ENCODE measurements at regions of chr2 and their contacts with region 1.

Region 1: DNA sequence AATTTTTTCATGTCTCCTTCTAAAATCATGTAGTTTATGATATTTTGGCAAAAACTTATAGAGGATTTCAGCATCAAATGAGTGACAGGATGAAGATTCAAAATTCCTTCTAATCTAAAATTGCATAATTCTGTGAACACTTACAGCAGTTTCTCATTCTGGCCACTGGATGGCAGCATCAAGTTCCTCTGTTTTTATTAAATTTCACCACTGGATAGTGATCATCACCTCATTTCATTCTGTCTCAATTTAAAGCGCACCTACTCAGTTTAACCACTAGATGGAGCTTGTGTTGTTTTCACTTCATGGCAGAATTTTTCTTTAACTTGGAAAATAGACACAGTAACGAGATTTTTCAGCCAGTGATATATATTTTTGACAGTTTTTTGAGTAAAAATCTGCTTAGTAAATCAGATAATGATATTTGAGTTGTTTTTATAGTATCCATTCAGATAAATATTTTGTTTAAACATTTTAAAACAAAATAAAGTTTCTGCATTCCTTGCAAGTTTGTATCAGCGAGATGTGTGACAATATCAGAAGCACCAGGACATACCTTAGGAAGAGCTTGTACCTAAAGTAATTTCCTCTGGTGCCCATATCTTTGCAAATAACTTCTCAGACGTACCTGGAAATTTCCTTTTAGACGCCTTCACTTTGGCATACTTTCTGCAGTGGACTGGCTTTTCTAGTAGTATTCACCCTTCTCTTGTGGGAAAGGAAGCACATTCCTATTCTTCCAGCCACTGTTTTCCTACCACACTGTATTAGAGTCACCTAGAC is 94.7 kb upstream of the ARHGAP15 start:
- DNase-seq: peak; percentile 78 to 88 (median 85)
- H3K4me3 ChIP-seq: no peak overlapping the region
- H3K4me3 Mint-ChIP-seq: no peak overlapping the region
- H3K27ac ChIP-seq: no peak overlapping the region
- H3K27ac Mint-ChIP-seq: no peak overlapping the region
- H3K4me1 ChIP-seq: peaks cover 12 to 13% of the 10 kb centered on the region in 2 donors
- H3K4me1 Mint-ChIP-seq: peaks cover 10% of the 10 kb centered on the region
- H3K27me3 ChIP-seq: no peaks in the 10 kb centered on the region
- H3K27me3 Mint-ChIP-seq: no peaks in the 10 kb centered on the region
- CTCF ChIP-seq: peak; percentile 98

Region 2: GRCh38 chr2:142965443-142965842 is 69.0 kb before region 1 on chr2:
- intact Hi-C with region 1: no loop called
- DNase-seq: no peak
- H3K4me3 ChIP-seq: no peak overlapping the region
- H3K4me3 Mint-ChIP-seq: no peak overlapping the region
- H3K27ac ChIP-seq: no peak overlapping the region
- H3K27ac Mint-ChIP-seq: no peak overlapping the region
- H3K4me1 ChIP-seq: no peaks in the 10 kb centered on the region
- H3K4me1 Mint-ChIP-seq: no peaks in the 10 kb centered on the region
- H3K27me3 ChIP-seq: no peaks in the 10 kb centered on the region
- H3K27me3 Mint-ChIP-seq: peaks cover 0 to 2% (median 0%) of the 10 kb centered on the region in 3 donors
- CTCF ChIP-seq: no peak

Region 3: DNA sequence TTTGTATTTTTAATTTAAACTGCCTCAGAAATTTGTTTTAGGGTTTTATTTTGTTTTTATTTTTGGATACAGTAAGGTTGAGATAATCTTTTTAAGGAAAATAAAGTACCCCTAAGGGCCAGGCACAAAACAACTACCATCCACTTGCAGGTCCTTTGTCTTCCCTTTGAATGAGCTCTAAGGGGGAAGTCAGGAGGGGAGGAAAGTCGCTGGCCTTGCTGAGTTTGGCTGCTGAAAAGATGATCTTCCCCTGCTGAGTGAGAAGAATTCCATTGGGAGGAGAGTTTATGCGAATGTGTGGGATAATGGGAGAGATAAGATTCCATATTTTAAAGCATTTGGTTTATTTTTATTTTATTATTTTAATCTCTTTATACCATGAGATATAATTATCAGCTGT is 195.5 kb after region 1 on chr2:
- intact Hi-C with region 1: loop called in 1 of 2 experiments (anchors 10 kb)
- DNase-seq: no peak
- H3K4me3 ChIP-seq: no peak overlapping the region
- H3K4me3 Mint-ChIP-seq: no peak overlapping the region
- H3K27ac ChIP-seq: no peak overlapping the region
- H3K27ac Mint-ChIP-seq: no peak overlapping the region
- H3K4me1 ChIP-seq: no peaks in the 10 kb centered on the region
- H3K4me1 Mint-ChIP-seq: no peaks in the 10 kb centered on the region
- H3K27me3 ChIP-seq: no peaks in the 10 kb centered on the region
- H3K27me3 Mint-ChIP-seq: no peaks in the 10 kb centered on the region
- CTCF ChIP-seq: no peak

Region 4: DNA sequence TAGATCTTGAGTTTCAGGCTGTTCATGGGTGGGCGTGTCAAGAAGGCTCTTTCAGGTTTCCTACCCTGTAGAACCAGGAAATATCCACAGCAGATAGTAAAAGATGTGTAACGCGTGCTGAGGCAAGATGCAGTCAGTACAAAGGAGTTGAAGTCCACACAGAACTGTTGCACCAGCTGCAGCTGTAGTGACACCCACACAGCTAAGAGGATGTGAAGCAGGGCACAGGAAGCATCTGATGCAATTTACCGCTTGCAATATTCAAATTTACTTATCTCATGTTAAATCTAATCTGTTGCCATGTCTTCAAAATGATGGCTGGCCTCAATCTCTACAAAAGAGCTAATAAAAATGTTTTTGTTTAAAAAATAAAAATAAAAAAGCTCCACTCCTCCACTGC is 227.5 kb after region 1 on chr2:
- intact Hi-C with region 1: loop called in 1 of 2 experiments (anchors 10 kb)
- DNase-seq: peak; percentile 86 to 90 (median 87)
- H3K4me3 ChIP-seq: peak overlapping the region in 1 of 3 experiments; percentile 11
- H3K4me3 Mint-ChIP-seq: peak overlapping the region in 1 of 2 donors; percentile 49
- H3K27ac ChIP-seq: peak overlapping the region; percentile 57 to 85
- H3K27ac Mint-ChIP-seq: peak overlapping the region; percentile 87 to 98 (median 94)
- H3K4me1 ChIP-seq: peaks cover 37 to 44% of the 10 kb centered on the region in 2 donors
- H3K4me1 Mint-ChIP-seq: peaks cover 39% of the 10 kb centered on the region
- H3K27me3 ChIP-seq: no peaks in the 10 kb centered on the region
- H3K27me3 Mint-ChIP-seq: peaks cover 0 to 2% (median 0%) of the 10 kb centered on the region in 3 donors
- CTCF ChIP-seq: no peak

Measured in CD14-positive monocyte (primary cell).